Activated T-helper 2 cell treated with anti-CD3 and anti-CD28 coated beads, Interferon-gamma antibody, Interleukin-2, Interleukin-4, amounts not matched to agents 10 μg/mL and 5 μg/mL and 100 μg/mL, durations not matched to agents 14 hours and 24 hours and 36 hours (primary cell): ENCODE measurements at regions of chr16 and their contacts with region 1.

Region 1: GRCh38 chr16:29029168-29029994 is 44.5 kb downstream of the LAT start:
- DNase-seq: peak; percentile 52
- H3K4me3 Mint-ChIP-seq: no peak overlapping the region
- H3K27ac Mint-ChIP-seq: peak overlapping the region; percentile 77
- H3K4me1 Mint-ChIP-seq: peaks cover 36% of the 10 kb centered on the region
- H3K27me3 Mint-ChIP-seq: no peaks in the 10 kb centered on the region

Region 2: GRCh38 chr16:28974437-28975157 is 54.8 kb before region 1 on chr16 and contains the start of gene SPNS1:
- intact Hi-C with region 1: loop called (anchors 2 kb)
- DNase-seq: peak; percentile 92
- H3K4me3 Mint-ChIP-seq: peak within 1 kb of the TSS; percentile 97
- H3K27ac Mint-ChIP-seq: peak within 1 kb of the TSS; percentile 95
- H3K4me1 Mint-ChIP-seq: peaks cover 18% of the 10 kb centered on the region
- H3K27me3 Mint-ChIP-seq: no peaks in the 10 kb centered on the region
- total RNA-seq, gene SPNS1: 22.0 and 25.8 TPM in 2 replicates